ENCODE measurements at regions of chr3 and their contacts with region 1.

Region 1: DNA sequence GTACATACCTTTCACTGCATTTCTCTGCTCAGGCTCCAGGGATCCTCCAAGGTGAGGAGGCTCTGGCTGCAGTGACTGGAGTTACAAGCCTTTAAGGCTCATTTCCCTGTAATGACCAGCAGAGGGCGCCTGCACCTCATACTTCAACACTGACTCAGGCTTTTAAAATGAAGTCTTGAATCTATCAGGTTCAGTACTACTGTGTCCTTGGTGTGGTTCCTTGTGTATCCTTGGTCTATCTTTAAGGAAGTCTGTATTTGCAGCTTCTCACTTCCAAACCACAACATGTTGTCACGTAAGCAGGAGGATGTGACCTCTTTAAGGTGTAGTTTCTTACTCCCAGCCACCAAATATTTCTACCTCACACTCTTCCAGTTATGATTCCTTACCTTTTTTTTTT is 122.5 kb upstream of the ZBED2 start:
- DNase-seq: peak; percentile 92
- H3K4me3 Mint-ChIP-seq: no peak overlapping the region
- H3K27ac Mint-ChIP-seq: peak overlapping the region; percentile 27
- H3K4me1 Mint-ChIP-seq: peaks cover 20% of the 10 kb centered on the region
- H3K27me3 Mint-ChIP-seq: no peaks in the 10 kb centered on the region
- CTCF ChIP-seq: peak; percentile 82

Region 2: GRCh38 chr3:110925798-110926197 is 791.8 kb before region 1 on chr3:
- CTCF ChIA-PET with region 1: no interaction called
- POLR2A ChIA-PET with region 1: no interaction called
- intact Hi-C with region 1: no loop called
- DNase-seq: no peak
- H3K4me3 Mint-ChIP-seq: no peak overlapping the region
- H3K27ac Mint-ChIP-seq: no peak overlapping the region
- H3K4me1 Mint-ChIP-seq: no peaks in the 10 kb centered on the region
- H3K27me3 Mint-ChIP-seq: no peaks in the 10 kb centered on the region
- CTCF ChIP-seq: no peak

Region 3: DNA sequence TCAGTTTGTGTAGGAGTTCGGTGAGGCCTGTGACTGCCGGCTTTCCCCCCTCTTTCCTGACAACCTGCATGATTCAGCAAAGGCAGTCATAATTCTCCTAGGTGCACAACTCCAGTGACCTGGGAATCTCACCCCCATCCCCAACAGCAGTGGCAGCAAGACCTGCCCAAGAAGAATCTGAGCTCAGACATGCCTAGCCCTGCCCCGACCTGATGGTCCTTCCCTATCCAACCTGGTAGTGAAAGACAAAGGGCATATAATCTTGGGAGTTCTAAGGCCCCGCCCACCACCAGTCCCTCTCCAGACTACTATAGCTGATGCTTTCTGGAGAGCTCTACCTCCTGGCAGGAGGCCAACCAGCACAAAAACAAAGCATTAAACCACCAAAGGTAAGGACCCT is 78.3 kb before region 1 on chr3:
- CTCF ChIA-PET with region 1: no interaction called
- POLR2A ChIA-PET with region 1: no interaction called
- intact Hi-C with region 1: no loop called
- DNase-seq: no peak
- H3K4me3 Mint-ChIP-seq: no peak overlapping the region
- H3K27ac Mint-ChIP-seq: no peak overlapping the region
- H3K4me1 Mint-ChIP-seq: no peaks in the 10 kb centered on the region
- H3K27me3 Mint-ChIP-seq: no peaks in the 10 kb centered on the region
- CTCF ChIP-seq: no peak

Region 4: DNA sequence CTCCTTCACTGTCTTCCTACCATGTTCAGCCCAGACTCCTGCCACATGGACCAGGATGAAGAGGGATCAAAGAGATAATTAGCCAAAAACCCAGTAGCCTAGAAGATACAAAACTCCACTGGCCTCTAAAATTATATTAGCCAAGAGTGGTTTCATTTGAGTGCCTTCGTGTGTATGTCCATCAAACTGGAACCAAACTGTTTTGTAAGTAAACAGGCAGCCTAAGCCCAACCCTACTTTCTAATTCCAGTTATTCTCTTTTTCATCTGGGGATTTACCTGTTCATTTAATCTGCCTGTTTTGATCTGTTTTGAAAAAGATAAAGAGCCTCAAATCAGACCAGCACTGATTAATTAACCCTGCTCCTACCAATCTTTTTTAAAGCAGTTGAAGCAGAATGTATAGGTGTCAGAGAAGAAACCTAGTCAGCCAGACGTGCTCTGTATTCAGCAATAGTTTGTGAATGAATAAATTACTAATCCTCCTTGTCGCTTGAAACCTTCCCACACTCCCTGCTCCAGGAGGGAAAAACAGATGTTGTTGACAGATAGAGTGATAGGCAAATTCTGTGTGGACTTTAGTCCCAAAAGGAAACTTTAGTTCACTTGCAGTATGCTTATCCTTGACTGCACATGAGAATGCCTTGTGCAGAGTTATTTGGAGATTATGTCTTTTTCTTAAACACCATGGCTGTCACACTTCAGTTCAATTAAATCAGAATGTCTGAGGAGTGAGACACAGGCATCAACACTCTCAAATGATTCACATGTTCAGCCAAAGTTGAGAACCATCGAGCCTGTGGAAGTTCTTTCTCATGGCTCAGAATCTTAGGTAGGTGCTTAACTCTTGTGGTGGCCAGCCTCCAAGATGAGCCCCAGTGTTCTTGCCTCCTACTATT is 67.0 kb before region 1 on chr3:
- CTCF ChIA-PET with region 1: no interaction called
- POLR2A ChIA-PET with region 1: no interaction called
- intact Hi-C with region 1: no loop called
- DNase-seq: no peak
- H3K4me3 Mint-ChIP-seq: no peak overlapping the region
- H3K27ac Mint-ChIP-seq: no peak overlapping the region
- H3K4me1 Mint-ChIP-seq: no peaks in the 10 kb centered on the region
- H3K27me3 Mint-ChIP-seq: no peaks in the 10 kb centered on the region
- CTCF ChIP-seq: no peak

Region 5: GRCh38 chr3:111668912-111669488 is 48.6 kb before region 1 on chr3:
- CTCF ChIA-PET with region 1: interaction called, 8 read pairs
- POLR2A ChIA-PET with region 1: interaction called, 6 read pairs
- intact Hi-C with region 1: loop called (anchors 1 kb)
- DNase-seq: peak; percentile 61
- H3K4me3 Mint-ChIP-seq: no peak overlapping the region
- H3K27ac Mint-ChIP-seq: peak overlapping the region; percentile 10
- H3K4me1 Mint-ChIP-seq: peaks cover 33% of the 10 kb centered on the region
- H3K27me3 Mint-ChIP-seq: no peaks in the 10 kb centered on the region
- CTCF ChIP-seq: peak; percentile 71

Region 6: GRCh38 chr3:111729087-111729846 is 11.7 kb after region 1 on chr3:
- CTCF ChIA-PET with region 1: interaction called, 72 read pairs
- POLR2A ChIA-PET with region 1: interaction called, 9 read pairs
- intact Hi-C with region 1: no loop called
- DNase-seq: peak; percentile 79
- H3K4me3 Mint-ChIP-seq: peak overlapping the region; percentile 25
- H3K27ac Mint-ChIP-seq: peak overlapping the region; percentile 62
- H3K4me1 Mint-ChIP-seq: peaks cover 30% of the 10 kb centered on the region
- H3K27me3 Mint-ChIP-seq: no peaks in the 10 kb centered on the region
- CTCF ChIP-seq: no peak

Region 7: GRCh38 chr3:111803123-111803593 is 85.6 kb after region 1 on chr3:
- CTCF ChIA-PET with region 1: interaction called, 51 read pairs
- POLR2A ChIA-PET with region 1: interaction called, 26 read pairs
- intact Hi-C with region 1: loop called (anchors 1 kb)
- DNase-seq: peak; percentile 97
- H3K4me3 Mint-ChIP-seq: peak overlapping the region; percentile 58
- H3K27ac Mint-ChIP-seq: peak overlapping the region; percentile 99
- H3K4me1 Mint-ChIP-seq: peaks cover 46% of the 10 kb centered on the region
- H3K27me3 Mint-ChIP-seq: no peaks in the 10 kb centered on the region
- CTCF ChIP-seq: no peak

Region 8: GRCh38 chr3:111895079-111895478 is 177.5 kb after region 1 on chr3:
- CTCF ChIA-PET with region 1: interaction called, 24 read pairs
- POLR2A ChIA-PET with region 1: interaction called, 3 read pairs
- intact Hi-C with region 1: no loop called
- DNase-seq: peak; percentile 63
- H3K4me3 Mint-ChIP-seq: no peak overlapping the region
- H3K27ac Mint-ChIP-seq: peak overlapping the region; percentile 69
- H3K4me1 Mint-ChIP-seq: peaks cover 14% of the 10 kb centered on the region
- H3K27me3 Mint-ChIP-seq: no peaks in the 10 kb centered on the region
- CTCF ChIP-seq: peak; percentile 46

Region 9: DNA sequence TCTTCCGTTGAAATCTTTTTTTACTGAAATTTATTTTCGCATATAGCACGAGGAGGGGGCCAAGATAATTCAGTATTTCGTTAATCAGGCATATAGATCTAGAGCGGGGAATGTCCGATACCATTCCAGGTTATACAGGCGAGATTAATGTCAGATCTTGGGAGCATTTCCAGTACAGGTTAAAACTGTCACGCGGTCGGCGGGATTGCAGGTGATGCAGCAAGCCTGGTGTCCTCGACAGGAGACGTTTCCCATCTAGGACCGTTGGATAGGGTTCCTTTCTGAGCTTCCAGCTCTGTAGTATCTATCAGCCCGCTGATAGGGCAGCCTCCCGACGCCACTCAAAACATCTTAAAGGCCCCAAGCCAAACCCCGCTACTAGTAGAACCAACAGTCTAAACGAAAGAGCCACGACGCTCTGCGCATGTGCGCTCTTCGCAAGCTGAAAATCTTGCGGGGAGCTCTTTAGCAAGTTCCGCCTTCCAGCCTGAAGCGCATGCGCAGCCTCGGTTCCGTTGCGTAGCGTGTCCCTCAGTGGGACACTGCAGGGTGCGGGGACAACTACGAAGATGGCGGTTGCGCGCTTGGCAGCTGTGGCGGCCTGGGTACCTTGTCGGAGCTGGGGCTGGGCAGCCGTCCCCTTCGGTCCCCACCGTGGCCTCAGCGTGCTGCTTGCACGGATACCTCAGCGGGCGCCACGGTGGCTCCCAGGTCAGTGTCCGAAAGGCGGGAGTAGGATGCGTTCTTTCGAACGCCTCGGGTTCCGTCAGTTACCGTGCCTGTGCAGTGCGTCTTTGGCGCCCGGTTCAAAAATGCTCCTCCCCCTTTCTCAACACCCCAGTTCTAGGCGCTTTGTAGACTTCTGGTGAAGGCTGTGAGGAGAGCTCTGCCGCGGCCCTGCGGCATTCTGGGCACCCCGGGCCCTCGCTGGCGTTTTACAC is 261.2 kb after region 1 on chr3 and contains the start of gene ABHD10:
- CTCF ChIA-PET with region 1: interaction called, 278 read pairs
- POLR2A ChIA-PET with region 1: interaction called, 5 read pairs
- intact Hi-C with region 1: no loop called
- DNase-seq: peak; percentile 98
- H3K4me3 Mint-ChIP-seq: peak within 1 kb of the TSS; percentile 85
- H3K27ac Mint-ChIP-seq: peak within 1 kb of the TSS; percentile 66
- H3K4me1 Mint-ChIP-seq: peaks cover 5% of the 10 kb centered on the region
- H3K27me3 Mint-ChIP-seq: no peaks in the 10 kb centered on the region
- CTCF ChIP-seq: no peak
- total RNA-seq, gene ABHD10: 26.0 and 34.1 TPM in 2 replicates